Activated CD4-positive, alpha-beta T cell treated with anti-CD3 and anti-CD28 coated beads, Interleukin-2, amount 10 ng/mL, durations not matched to agents 7 days and 5 days (primary cell): ENCODE measurements at regions of chr2 and their contacts with region 1.

Region 1: DNA sequence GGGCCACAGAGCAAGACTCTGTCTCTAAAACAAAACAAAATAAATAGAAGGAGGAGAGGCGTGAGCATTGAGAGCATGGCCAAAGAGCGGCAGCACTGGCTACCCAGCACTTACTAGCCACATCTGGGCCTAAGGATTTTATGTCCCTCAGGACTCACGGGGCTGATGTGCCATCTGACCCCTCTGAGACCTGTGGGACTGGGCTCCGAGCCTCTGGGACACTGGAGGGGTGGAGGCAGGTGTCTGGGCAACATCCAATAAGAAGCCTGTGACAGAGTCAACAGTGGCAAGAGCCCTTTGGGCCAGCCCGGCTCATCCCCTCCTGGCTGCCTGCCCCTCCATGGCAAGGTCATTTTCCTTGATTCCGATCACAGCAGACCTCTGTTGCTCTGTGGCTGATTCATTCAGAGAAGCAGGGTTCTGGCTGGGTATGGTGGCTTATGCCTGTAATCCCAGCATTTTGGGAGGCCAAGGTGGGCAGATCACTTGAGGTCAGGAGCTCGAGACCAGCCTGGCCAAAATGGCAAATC is 60.7 kb downstream of the RRM2 start:
- DNase-seq: no peak
- H3K4me3 Mint-ChIP-seq: no peak overlapping the region
- H3K27ac Mint-ChIP-seq: no peak overlapping the region
- H3K4me1 Mint-ChIP-seq: no peaks in the 10 kb centered on the region
- H3K27me3 Mint-ChIP-seq: no peaks in the 10 kb centered on the region

Region 2: GRCh38 chr2:10172033-10172871 is 11.0 kb before region 1 on chr2:
- CTCF ChIA-PET with region 1: interaction called, 14 read pairs
- POLR2A ChIA-PET with region 1: no interaction called
- DNase-seq: no peak
- H3K4me3 Mint-ChIP-seq: no peak overlapping the region
- H3K27ac Mint-ChIP-seq: no peak overlapping the region
- H3K4me1 Mint-ChIP-seq: no peaks in the 10 kb centered on the region
- H3K27me3 Mint-ChIP-seq: no peaks in the 10 kb centered on the region